ENCODE measurements at regions of chr1 and their contacts with region 1.

Region 1: DNA sequence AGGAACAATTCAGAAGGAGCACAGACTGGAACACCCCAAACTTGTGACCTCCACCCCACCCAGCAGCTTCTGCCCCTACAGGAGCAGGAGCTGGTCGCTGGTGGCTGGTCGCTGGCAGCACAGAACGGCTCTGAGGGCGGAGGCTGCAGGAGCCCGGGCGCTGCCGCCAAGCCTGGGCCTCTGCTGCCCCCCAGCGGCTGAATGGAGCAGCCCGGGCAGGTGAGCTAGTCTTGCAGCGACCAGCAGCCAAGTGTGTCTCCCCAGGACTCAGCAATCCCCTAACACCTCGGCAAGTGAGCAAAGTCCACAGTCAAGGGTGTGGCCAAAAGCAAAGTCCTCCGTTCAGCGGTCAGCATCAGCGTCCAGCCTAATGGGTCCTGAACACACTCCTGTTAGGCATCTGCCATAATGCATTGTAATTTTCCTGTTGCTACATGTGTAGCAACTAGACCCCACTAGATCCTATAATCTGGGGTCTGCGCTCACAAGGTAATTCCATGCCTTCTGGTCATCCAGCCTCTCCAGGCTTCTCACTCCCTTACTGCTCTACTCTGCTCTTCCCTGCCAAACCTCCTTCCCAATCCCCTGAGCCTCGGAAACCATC is 12.1 kb upstream of the GJB5 start:
- DNase-seq: peak; percentile 61 to 75
- H3K4me3 ChIP-seq: no peak overlapping the region
- H3K27ac ChIP-seq: no peak overlapping the region
- H3K4me1 ChIP-seq: peaks cover 0 to 6% (median 0%) of the 10 kb centered on the region in 4 donors
- H3K27me3 ChIP-seq: peaks cover 0 to 28% of the 10 kb centered on the region in 2 donors
- CTCF ChIP-seq: peak; percentile 78 to 95

Region 2: GRCh38 chr1:33633019-33633801 is 1109.6 kb before region 1 on chr1:
- intact Hi-C with region 1: loop called (anchors 5 kb)
- DNase-seq: peak; percentile 91 to 93
- H3K4me3 ChIP-seq: no peak overlapping the region
- H3K27ac ChIP-seq: no peak overlapping the region
- H3K4me1 ChIP-seq: no peaks in the 10 kb centered on the region
- H3K27me3 ChIP-seq: peaks cover 0 to 4% of the 10 kb centered on the region in 2 donors
- CTCF ChIP-seq: peak; percentile 82 to 97